Mammary epithelial cell (primary cell): ENCODE measurements at regions of chr18 and their contacts with region 1.

Region 1: GRCh38 chr18:24055878-24056277 is 41.3 kb downstream of the TTC39C start:
- DNase-seq: no peak
- H3K4me3 ChIP-seq: no peak overlapping the region
- H3K27ac ChIP-seq: peak overlapping the region; percentile 81
- H3K4me1 ChIP-seq: peaks cover 52% of the 10 kb centered on the region
- H3K27me3 ChIP-seq: no peaks in the 10 kb centered on the region
- CTCF ChIP-seq: no peak

Region 2: DNA sequence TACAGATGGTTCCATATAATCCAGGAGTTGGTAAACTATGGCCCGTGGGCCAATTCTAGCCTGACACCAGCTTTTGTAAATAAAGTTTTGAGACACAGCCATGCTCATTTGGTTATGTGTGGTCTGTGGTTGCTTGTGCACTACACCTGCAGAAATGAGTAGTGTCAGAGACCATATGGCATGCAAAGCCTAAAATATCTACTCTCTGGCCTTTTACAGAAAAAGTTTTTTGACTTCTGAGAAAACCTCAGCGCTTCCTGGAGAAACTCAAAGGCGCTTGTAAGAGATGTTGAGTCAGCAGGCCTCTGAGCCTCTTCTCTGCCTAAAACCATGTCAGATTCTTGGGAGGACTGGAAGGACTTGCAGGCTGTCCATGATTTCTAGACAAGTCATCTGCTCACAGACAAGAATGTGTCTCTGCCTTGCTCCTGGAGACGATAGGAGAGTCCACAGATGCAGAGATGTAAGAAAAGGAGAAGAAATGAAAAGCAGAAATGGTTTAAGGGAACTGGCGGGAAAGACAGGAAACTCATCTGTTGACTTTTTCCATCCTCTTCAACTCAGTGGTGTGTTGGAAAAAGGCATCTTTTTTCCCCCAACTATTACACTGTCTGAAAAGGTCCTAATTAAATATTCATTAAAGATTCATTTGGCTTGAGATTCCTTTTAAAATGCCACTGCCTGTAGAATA is 36.1 kb before region 1 on chr18:
- CTCF ChIA-PET with region 1: no interaction called
- dilution Hi-C with region 1: loop called (anchors 5 kb)
- in situ Hi-C with region 1: no loop called
- intact Hi-C with region 1: loop called (anchors 5 kb)
- DNase-seq: no peak
- H3K4me3 ChIP-seq: no peak overlapping the region
- H3K27ac ChIP-seq: no peak overlapping the region
- H3K4me1 ChIP-seq: peaks cover 29% of the 10 kb centered on the region
- H3K27me3 ChIP-seq: no peaks in the 10 kb centered on the region
- CTCF ChIP-seq: no peak